Esophagus muscularis mucosa (tissue), 4 donors: ENCODE measurements at regions of chr1 and their contacts with region 1.

Region 1: GRCh38 chr1:208093754-208094719 is 150.1 kb downstream of the PLXNA2 start:
- DNase-seq: no peak
- H3K4me3 ChIP-seq: no peak overlapping the region
- H3K27ac ChIP-seq: no peak overlapping the region
- H3K4me1 ChIP-seq: peaks cover 12 to 21% (median 19%) of the 10 kb centered on the region in 4 donors
- H3K27me3 ChIP-seq: no peaks in the 10 kb centered on the region
- CTCF ChIP-seq: peak; percentile 53 to 71 (median 59)
- EP300 ChIP-seq: no peak
- POLR2A ChIP-seq: no peak

Region 2: GRCh38 chr1:208025031-208025430 is 69.0 kb before region 1 on chr1:
- intact Hi-C with region 1: loop called (anchors 5 kb)
- DNase-seq: no peak
- H3K4me3 ChIP-seq: no peak overlapping the region
- H3K27ac ChIP-seq: no peak overlapping the region
- H3K4me1 ChIP-seq: peaks cover 5 to 26% (median 19%) of the 10 kb centered on the region in 4 donors
- H3K27me3 ChIP-seq: no peaks in the 10 kb centered on the region
- CTCF ChIP-seq: no peak
- EP300 ChIP-seq: no peak
- POLR2A ChIP-seq: no peak